Ascending aorta (tissue), 2 donors: ENCODE measurements at regions of chr10 and their contacts with region 1.

Region 1: DNA sequence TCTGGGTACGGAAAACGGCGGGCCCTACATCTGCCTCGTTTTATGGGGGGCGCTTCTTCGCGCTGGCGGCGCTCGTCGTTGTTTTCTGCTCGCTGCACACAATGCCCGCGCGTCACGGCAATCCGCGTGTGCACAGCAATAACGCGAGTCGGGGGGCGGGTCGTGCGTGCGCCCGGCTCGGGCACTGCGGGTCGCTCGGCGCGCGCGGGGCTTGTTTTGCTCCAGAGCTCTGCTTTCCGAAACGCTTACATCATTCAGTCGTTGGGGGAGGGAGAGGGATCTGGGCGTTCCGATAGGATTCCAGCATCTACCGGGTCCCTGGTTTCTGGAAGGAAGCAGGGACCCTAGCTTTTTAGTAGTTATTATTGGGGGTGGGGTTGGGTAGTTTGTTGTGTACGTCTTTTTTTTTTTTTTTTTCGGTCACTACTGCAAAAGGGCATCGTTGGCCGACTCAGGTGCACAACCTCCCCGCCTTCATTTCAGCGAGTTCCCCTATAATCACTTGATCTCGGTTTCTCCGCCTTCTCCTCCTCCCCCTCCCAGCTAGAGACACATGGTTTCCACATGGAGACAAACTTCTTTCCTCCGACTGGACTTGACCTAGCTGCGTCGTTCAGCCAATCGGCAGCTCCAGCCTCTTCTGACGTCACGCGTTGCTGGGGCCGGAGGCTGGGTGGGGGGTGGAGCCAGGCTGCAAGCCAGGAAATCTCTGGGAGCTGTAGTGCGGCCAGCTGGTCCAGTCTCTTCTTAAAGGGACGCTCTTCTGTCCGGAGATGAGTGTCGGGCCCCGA is 3.5 kb downstream of the MXI1 start:
- DNase-seq: peak; percentile 89 to 98
- H3K4me3 ChIP-seq: peak overlapping the region; percentile 74 to 93
- H3K27ac ChIP-seq: peak overlapping the region; percentile 97 to 99
- H3K4me1 ChIP-seq: peaks cover 3 to 34% of the 10 kb centered on the region in 2 donors
- H3K27me3 ChIP-seq: no peaks in the 10 kb centered on the region
- CTCF ChIP-seq: peak in 1 of 3 experiments; percentile 2

Region 2: DNA sequence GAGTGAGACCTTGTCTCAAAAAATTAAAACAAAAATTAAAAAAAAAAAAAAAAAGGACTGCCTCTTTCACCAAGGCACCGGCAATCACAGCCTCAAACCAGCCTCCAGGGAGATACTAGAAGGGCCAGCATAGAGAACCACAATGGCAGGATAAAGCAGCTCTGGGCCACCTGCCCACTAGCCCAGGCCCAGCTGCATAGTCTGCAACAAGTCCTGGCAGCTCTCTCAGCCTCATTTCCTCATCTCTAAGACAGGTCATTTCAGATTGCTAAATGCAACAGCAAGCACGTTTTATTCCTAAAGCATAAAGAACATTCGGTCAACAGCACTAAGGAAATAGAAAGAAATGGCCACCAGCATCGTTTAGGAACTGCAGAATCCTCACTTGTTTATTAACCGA is 316.4 kb before region 1 on chr10:
- intact Hi-C with region 1: loop called (anchors 5 kb)
- DNase-seq: peak; percentile 46 to 91
- H3K4me3 ChIP-seq: peak overlapping the region; percentile 6 to 18
- H3K27ac ChIP-seq: peak overlapping the region; percentile 82 to 94
- H3K4me1 ChIP-seq: peaks cover 19 to 94% of the 10 kb centered on the region in 2 donors
- H3K27me3 ChIP-seq: no peaks in the 10 kb centered on the region
- CTCF ChIP-seq: no peak

Region 3: GRCh38 chr10:110137142-110137545 is 73.7 kb before region 1 on chr10:
- intact Hi-C with region 1: loop called (anchors 2 kb)
- DNase-seq: no peak
- H3K4me3 ChIP-seq: no peak overlapping the region
- H3K27ac ChIP-seq: peak overlapping the region; percentile 38 to 53
- H3K4me1 ChIP-seq: peaks cover 0 to 15% of the 10 kb centered on the region in 2 donors
- H3K27me3 ChIP-seq: no peaks in the 10 kb centered on the region
- CTCF ChIP-seq: peak; percentile 72 to 86 (median 78)

Region 4: GRCh38 chr10:110244550-110244949 is 33.7 kb after region 1 on chr10:
- intact Hi-C with region 1: no loop called
- DNase-seq: no peak
- H3K4me3 ChIP-seq: no peak overlapping the region
- H3K27ac ChIP-seq: no peak overlapping the region
- H3K4me1 ChIP-seq: peaks cover 0 to 13% of the 10 kb centered on the region in 2 donors
- H3K27me3 ChIP-seq: no peaks in the 10 kb centered on the region
- CTCF ChIP-seq: no peak

Region 5: DNA sequence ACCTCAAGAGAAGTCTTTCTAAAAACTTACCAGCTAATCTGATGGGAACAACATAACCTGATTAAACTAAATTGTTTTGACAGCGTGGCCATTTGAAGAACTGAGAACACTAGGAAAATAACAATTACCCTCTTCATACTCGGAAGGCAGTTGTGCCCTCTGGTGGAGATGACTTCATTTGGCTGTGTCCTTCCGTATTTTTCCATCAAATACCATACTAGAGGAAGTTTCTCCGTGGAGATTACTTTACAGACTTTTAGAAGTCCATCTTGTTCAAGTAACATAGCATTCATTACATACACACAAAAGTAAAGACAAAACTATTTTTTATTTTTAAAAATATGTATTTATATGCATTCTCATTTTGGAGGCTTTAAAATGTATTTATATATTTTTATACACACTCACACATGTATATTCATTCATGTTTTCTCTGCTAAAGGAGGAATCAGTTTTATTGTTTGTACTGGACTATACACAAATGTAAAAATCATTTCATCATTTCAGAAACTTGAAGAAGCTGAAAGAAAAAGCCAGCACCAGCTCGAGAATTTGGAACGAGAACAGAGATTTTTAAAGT is 68.6 kb after region 1 on chr10:
- intact Hi-C with region 1: loop called (anchors 1 kb)
- DNase-seq: peak in 1 of 2 donors; percentile 81
- H3K4me3 ChIP-seq: peak overlapping the region; percentile 14 to 33
- H3K27ac ChIP-seq: peak overlapping the region; percentile 30 to 42
- H3K4me1 ChIP-seq: peaks cover 0 to 46% of the 10 kb centered on the region in 2 donors
- H3K27me3 ChIP-seq: no peaks in the 10 kb centered on the region
- CTCF ChIP-seq: peak; percentile 66 to 78 (median 76)

Region 6: GRCh38 chr10:110547139-110547761 is 336.4 kb after region 1 on chr10:
- intact Hi-C with region 1: loop called (anchors 10 kb)
- DNase-seq: no peak
- H3K4me3 ChIP-seq: no peak overlapping the region
- H3K27ac ChIP-seq: no peak overlapping the region
- H3K4me1 ChIP-seq: no peaks in the 10 kb centered on the region
- H3K27me3 ChIP-seq: no peaks in the 10 kb centered on the region
- CTCF ChIP-seq: peak; percentile 49 to 86 (median 82)

Region 7: GRCh38 chr10:110567201-110568054 is 356.6 kb after region 1 on chr10 and contains the start of gene SMC3:
- intact Hi-C with region 1: loop called (anchors 5 kb)
- DNase-seq: peak; percentile 40 to 94
- H3K4me3 ChIP-seq: peak within 1 kb of the TSS; percentile 81 to 97
- H3K27ac ChIP-seq: peak within 1 kb of the TSS; percentile 84 to 85
- H3K4me1 ChIP-seq: peaks cover 0 to 10% of the 10 kb centered on the region in 2 donors
- H3K27me3 ChIP-seq: no peaks in the 10 kb centered on the region
- CTCF ChIP-seq: no peak
- total RNA-seq, gene SMC3: 14.8 TPM